Left cardiac atrium (tissue), 4 donors: ENCODE measurements at regions of chr4 and their contacts with region 1.

Region 1: GRCh38 chr4:140252742-140253555 is 99.0 kb upstream of the MAML3 start:
- DNase-seq: peak; percentile 76
- ATAC-seq: peak; percentile 88 to 92

Region 2: DNA sequence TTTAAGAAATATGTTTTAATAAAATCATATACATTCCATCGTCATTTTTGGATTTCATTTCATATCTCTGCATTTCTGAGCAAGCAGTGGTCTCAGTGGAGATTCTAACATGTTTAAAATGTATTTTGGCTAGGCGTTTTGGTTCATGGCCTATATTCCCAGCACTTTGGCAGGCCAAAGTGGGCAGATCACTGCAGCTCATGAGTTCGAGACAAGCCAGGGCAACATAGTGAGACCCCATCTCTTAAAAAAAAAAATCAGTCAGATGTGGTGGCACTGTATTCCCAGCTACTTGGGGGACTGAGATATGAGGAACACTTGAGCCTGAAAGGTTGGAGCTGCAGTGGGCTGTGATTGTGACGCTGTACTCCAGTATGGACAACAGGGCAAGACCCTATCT is 866.5 kb before region 1 on chr4:
- intact Hi-C with region 1: no loop called
- DNase-seq: no peak
- ATAC-seq: no peak

Region 3: DNA sequence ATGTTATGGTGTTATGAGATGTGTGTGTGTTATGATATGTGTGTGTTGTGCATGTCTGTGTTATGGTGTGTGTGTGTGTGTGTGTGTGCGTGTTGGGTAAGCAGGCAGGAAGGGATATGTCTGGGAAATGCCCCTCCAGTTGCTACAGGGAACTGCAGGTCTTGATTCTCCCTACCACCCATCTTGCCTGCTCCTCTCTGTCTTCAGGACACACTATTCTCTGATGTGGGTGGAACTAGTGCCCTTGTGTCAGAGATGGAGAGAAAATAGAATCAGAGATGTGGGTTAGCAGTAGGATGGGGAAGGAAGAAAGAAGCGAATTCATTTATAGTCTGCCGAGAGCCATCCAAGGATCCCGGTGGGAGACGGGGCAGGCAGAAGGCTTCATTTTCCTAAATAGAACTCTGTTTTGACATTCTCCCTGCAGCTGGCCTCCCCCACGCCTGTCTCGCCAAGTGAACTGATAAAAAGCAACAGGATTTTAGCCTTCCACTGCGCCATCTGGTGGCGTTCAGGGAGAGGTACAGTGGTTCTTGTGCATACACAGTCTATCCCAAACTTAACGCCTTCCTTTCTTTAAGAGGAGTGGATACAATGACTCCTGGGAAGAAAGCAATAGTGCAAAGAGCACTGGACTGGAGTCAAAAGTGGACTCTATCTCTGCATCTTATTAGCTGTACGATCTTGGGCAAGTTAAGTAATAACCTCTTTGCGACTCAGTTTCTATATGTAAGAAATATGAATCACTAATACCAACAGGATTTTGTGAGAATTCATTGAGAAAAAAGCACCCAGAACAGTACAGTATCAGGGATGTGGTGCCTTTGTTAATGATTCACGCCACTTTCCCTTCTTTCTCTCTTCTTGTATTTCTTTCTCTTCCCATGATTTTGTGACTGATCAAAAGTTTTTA is 601.4 kb before region 1 on chr4:
- intact Hi-C with region 1: loop called in 1 of 2 experiments (anchors 5 kb)
- DNase-seq: peak; percentile 90
- ATAC-seq: peak; percentile 89 to 92

Region 4: GRCh38 chr4:140004549-140004895 is 248.4 kb before region 1 on chr4:
- intact Hi-C with region 1: loop called in 1 of 2 experiments (anchors 10 kb)
- DNase-seq: peak; percentile 61
- ATAC-seq: peak; percentile 92 to 96

Region 5: GRCh38 chr4:140012688-140013486 is 240.1 kb before region 1 on chr4:
- intact Hi-C with region 1: loop called (anchors 5 to 10 kb)
- DNase-seq: peak; percentile 53
- ATAC-seq: peak; percentile 90 to 92

Region 6: DNA sequence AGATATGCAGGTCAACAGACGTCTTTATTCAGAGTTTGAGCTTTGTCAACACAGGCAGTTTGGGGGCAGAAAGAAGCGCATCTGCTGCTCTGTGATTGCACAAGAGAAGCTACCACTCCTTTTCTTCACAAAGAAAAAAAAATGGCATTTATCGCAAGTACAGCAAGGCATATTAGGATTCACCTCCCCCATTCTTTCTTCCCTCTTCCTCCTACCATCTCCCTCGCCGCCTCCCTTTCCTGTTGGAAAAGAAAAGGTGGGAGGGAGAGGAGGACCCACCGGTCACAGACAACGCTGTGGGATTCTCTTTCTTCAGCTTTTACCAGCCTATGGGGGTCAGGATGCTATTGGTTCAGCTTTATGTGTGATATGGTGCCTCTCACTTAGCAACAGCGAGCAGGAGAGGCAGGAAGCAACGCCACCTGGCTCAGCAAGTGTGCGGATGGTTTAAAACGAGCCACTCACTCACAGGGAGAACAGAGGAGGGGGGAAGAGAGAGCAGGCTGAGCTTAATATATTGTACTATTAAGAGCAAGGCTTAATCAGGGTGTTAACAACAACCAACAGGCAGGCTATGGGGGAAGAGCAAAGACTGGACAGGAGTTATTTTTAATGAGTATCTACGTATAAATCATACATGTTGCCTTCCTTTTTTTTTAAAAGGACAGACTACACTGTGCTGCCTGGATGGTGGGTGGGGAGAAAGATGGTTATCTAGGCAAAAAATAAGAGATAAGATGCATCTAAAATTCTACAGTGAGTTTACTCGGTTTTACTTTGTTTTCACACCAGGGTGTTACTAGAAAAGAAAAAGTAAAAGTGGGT is 203.7 kb before region 1 on chr4:
- intact Hi-C with region 1: loop called in 1 of 2 experiments (anchors 5 kb)
- DNase-seq: peak; percentile 33
- ATAC-seq: peak; percentile 82 to 83

Region 7: GRCh38 chr4:140153718-140154571 is 99.0 kb before region 1 on chr4 and contains the start of gene MAML3:
- intact Hi-C with region 1: loop called (anchors 1 to 5 kb)
- DNase-seq: peak; percentile 96
- ATAC-seq: peak; percentile 62 to 63
- total RNA-seq, gene MAML3: 2.6 to 3.0 TPM